Activated CD8-positive, alpha-beta T cell treated with anti-CD3 and anti-CD28 coated beads for 36 hours (primary cell): ENCODE measurements at regions of chr2 and their contacts with region 1.

Region 1: GRCh38 chr2:85132834-85133637 is at the start of gene TCF7L1:
- DNase-seq: peak; percentile 50
- ATAC-seq: peak; percentile 86
- H3K4me3 Mint-ChIP-seq: peak within 1 kb of the TSS; percentile 65
- H3K27ac Mint-ChIP-seq: no peak within 1 kb of the TSS
- H3K4me1 Mint-ChIP-seq: peaks cover 8% of the 10 kb centered on the region
- H3K27me3 Mint-ChIP-seq: peaks cover 54% of the 10 kb centered on the region
- CTCF ChIP-seq: peak; percentile 48
- total RNA-seq, gene TCF7L1: not detected

Region 2: GRCh38 chr2:85143463-85144082 is 10.5 kb after region 1 on chr2:
- CTCF ChIA-PET with region 1: interaction called, 10 read pairs
- POLR2A ChIA-PET with region 1: interaction called, 3 read pairs
- intact Hi-C with region 1: no loop called
- DNase-seq: no peak
- ATAC-seq: no peak
- H3K4me3 Mint-ChIP-seq: no peak overlapping the region
- H3K27ac Mint-ChIP-seq: no peak overlapping the region
- H3K4me1 Mint-ChIP-seq: no peaks in the 10 kb centered on the region
- H3K27me3 Mint-ChIP-seq: peaks cover 25% of the 10 kb centered on the region
- CTCF ChIP-seq: no peak